ENCODE measurements at regions of chr1 and their contacts with region 1.

Region 1: GRCh38 chr1:55215256-55216021 is at the start of gene USP24:
- DNase-seq: peak; percentile 90
- ATAC-seq: peak; percentile 74
- H3K4me3 ChIP-seq: peak within 1 kb of the TSS; percentile 72 to 83 (median 79)
- H3K4me3 Mint-ChIP-seq: peak within 1 kb of the TSS; percentile 98
- H3K27ac ChIP-seq: peak within 1 kb of the TSS; percentile 95 to 97
- H3K27ac Mint-ChIP-seq: peak within 1 kb of the TSS; percentile 99
- H3K4me1 ChIP-seq: peaks cover 54 to 59% of the 10 kb centered on the region in 2 donors
- H3K4me1 Mint-ChIP-seq: peaks cover 64% of the 10 kb centered on the region
- H3K27me3 ChIP-seq: no peaks in the 10 kb centered on the region
- H3K27me3 Mint-ChIP-seq: no peaks in the 10 kb centered on the region
- CTCF ChIP-seq: no peak
- total RNA-seq, gene USP24: 152 and 183 TPM in 2 replicates

Region 2: DNA sequence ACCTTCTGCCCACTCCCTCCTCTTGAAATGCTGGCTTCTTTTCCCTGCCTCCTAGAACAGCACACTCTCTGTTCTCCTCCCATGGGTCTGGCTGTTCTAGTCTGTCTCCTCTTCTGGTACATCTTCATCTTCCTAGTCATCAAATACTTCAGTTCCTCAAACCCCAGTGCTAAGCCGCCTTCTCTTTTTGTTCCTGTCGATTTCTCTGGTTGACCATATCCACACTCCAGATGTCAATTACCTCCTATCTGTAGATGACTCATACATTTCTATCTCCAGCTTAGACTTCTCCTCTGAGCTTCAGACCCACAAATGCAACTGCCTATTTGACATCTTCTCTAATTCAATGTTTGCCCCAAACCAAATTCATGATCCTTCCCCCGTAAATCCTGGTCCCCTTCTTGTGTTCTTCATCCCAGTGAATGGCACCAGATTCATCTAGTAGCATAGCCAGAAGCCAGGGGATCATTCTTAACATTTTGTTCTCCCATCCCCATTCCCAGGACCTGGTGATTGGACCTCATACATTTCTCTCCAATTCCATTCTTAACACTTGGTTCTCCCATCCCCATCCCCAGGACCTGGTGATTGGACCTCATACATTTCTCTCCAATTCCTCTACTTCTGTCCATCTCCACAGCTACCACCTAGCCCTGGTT is 36.1 kb before region 1 on chr1:
- CTCF ChIA-PET with region 1: interaction called, 9 read pairs
- POLR2A ChIA-PET with region 1: no interaction called
- intact Hi-C with region 1: loop called (anchors 5 kb)
- DNase-seq: no peak
- ATAC-seq: no peak
- H3K4me3 ChIP-seq: no peak overlapping the region
- H3K4me3 Mint-ChIP-seq: no peak overlapping the region
- H3K27ac ChIP-seq: peak overlapping the region in 1 of 2 donors; percentile 52
- H3K27ac Mint-ChIP-seq: peak overlapping the region; percentile 0
- H3K4me1 ChIP-seq: peaks cover 0 to 7% of the 10 kb centered on the region in 2 donors
- H3K4me1 Mint-ChIP-seq: peaks cover 42% of the 10 kb centered on the region
- H3K27me3 ChIP-seq: no peaks in the 10 kb centered on the region
- H3K27me3 Mint-ChIP-seq: no peaks in the 10 kb centered on the region
- CTCF ChIP-seq: no peak

Region 3: GRCh38 chr1:55195521-55196233 is 19.8 kb before region 1 on chr1:
- CTCF ChIA-PET with region 1: interaction called, 3 read pairs
- POLR2A ChIA-PET with region 1: no interaction called
- intact Hi-C with region 1: loop called (anchors 2 kb)
- DNase-seq: no peak
- ATAC-seq: no peak
- H3K4me3 ChIP-seq: no peak overlapping the region
- H3K4me3 Mint-ChIP-seq: no peak overlapping the region
- H3K27ac ChIP-seq: peak overlapping the region in 1 of 2 donors; percentile 50
- H3K27ac Mint-ChIP-seq: peak overlapping the region; percentile 54
- H3K4me1 ChIP-seq: peaks cover 17 to 39% of the 10 kb centered on the region in 2 donors
- H3K4me1 Mint-ChIP-seq: peaks cover 59% of the 10 kb centered on the region
- H3K27me3 ChIP-seq: no peaks in the 10 kb centered on the region
- H3K27me3 Mint-ChIP-seq: no peaks in the 10 kb centered on the region
- CTCF ChIP-seq: no peak

Region 4: DNA sequence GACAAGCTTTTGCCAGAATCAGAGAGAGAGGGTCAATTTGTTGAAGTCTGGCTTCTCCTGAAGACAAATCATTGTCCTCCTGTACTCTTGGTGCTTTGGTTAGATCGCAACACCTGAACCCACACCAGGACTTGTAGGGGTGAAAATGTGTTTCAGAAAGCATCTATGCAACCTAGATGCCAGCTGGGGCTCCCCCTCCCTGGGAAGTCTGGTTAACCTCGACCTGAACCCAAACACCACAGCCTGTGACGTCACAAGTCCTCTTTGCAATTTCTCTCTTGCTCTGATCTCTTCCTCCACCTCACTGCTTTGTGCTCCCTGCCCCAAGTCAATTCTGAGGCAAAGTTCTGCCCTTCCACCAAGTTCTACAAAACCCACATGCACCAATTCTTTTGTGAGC is 42.5 kb after region 1 on chr1:
- CTCF ChIA-PET with region 1: interaction called, 7 read pairs
- POLR2A ChIA-PET with region 1: interaction called, 10 read pairs
- intact Hi-C with region 1: loop called (anchors 1 kb)
- DNase-seq: peak; percentile 87
- ATAC-seq: peak; percentile 53
- H3K4me3 ChIP-seq: peak overlapping the region in 1 of 5 experiments; percentile 24
- H3K4me3 Mint-ChIP-seq: peak overlapping the region; percentile 75
- H3K27ac ChIP-seq: peak overlapping the region; percentile 84 to 89
- H3K27ac Mint-ChIP-seq: peak overlapping the region; percentile 94
- H3K4me1 ChIP-seq: peaks cover 74 to 75% of the 10 kb centered on the region in 2 donors
- H3K4me1 Mint-ChIP-seq: peaks cover 78% of the 10 kb centered on the region
- H3K27me3 ChIP-seq: no peaks in the 10 kb centered on the region
- H3K27me3 Mint-ChIP-seq: no peaks in the 10 kb centered on the region
- CTCF ChIP-seq: no peak

Measured in B cell (primary cell).